Activated CD4-positive, alpha-beta memory T cell treated with anti-CD3 and anti-CD28 coated beads, Interleukin-2, amount 10 ng/mL, durations not matched to agents 7 days and 5 days (primary cell): ENCODE measurements at regions of chr12 and their contacts with region 1.

Region 1: GRCh38 chr12:68844788-68845695 is 37.1 kb downstream of the MDM2 start:
- DNase-seq: no peak
- H3K4me3 Mint-ChIP-seq: no peak overlapping the region
- H3K27ac Mint-ChIP-seq: no peak overlapping the region
- H3K4me1 Mint-ChIP-seq: no peaks in the 10 kb centered on the region
- H3K27me3 Mint-ChIP-seq: no peaks in the 10 kb centered on the region

Region 2: DNA sequence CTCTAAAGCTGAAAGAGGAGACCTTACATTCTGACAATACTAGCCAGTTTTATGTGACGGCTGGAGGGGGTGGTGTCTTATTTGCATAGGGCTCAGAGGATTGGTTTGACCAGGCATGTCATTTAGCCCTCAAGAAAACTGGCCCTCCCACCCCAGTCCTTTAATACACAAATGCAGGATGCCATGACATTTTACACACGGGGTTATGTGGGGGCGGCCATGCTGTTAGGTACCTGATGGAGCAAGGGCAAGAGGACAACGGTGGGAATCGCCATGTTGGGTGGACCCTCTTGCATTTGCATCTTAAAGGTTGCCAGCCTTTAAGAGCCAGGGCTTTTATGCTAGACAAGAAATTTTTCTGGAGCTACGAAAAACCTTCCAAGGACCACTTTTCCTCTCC is 13.8 kb before region 1 on chr12:
- CTCF ChIA-PET with region 1: interaction called, 27 read pairs
- POLR2A ChIA-PET with region 1: interaction called, 8 read pairs
- DNase-seq: no peak
- H3K4me3 Mint-ChIP-seq: no peak overlapping the region
- H3K27ac Mint-ChIP-seq: no peak overlapping the region
- H3K4me1 Mint-ChIP-seq: peaks cover 20% of the 10 kb centered on the region
- H3K27me3 Mint-ChIP-seq: no peaks in the 10 kb centered on the region